ENCODE measurements at regions of chr3 and their contacts with region 1.

Region 1: GRCh38 chr3:160413613-160414248 is 14.3 kb downstream of the SMC4 start:
- DNase-seq: peak; percentile 78
- ATAC-seq: peak; percentile 69
- H3K4me3 Mint-ChIP-seq: no peak overlapping the region
- H3K27ac Mint-ChIP-seq: no peak overlapping the region
- H3K4me1 Mint-ChIP-seq: peaks cover 2% of the 10 kb centered on the region
- H3K27me3 Mint-ChIP-seq: no peaks in the 10 kb centered on the region

Region 2: GRCh38 chr3:159861369-159861987 is 552.3 kb before region 1 on chr3:
- CTCF ChIA-PET with region 1: no interaction called
- POLR2A ChIA-PET with region 1: no interaction called
- intact Hi-C with region 1: no loop called
- DNase-seq: no peak
- ATAC-seq: no peak
- H3K4me3 Mint-ChIP-seq: no peak overlapping the region
- H3K27ac Mint-ChIP-seq: no peak overlapping the region
- H3K4me1 Mint-ChIP-seq: no peaks in the 10 kb centered on the region
- H3K27me3 Mint-ChIP-seq: peaks cover 4% of the 10 kb centered on the region

Region 3: DNA sequence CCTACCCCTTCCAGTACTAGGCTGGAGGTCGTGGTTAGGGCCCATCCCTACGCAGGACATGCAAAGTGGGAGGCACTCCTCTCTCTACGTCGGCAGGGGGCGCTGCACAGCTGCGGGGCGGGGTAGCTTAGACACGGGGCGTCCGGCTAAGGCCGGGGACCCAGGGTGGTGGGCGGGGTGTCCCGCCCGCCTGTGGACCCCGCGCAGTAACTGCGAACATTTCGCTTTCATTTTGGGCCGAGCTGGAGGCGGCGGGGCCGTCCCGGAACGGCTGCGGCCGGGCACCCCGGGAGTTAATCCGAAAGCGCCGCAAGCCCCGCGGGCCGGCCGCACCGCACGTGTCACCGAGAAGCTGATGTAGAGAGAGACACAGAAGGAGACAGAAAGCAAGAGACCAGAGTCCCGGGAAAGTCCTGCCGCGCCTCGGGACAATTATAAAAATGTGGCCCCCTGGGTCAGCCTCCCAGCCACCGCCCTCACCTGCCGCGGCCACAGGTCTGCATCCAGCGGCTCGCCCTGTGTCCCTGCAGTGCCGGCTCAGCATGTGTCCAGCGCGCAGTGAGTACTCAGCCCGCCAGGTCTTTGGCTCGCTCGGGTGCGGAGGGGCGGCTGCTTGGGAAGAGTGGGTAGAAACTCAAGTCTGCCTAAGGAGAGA is 425.0 kb before region 1 on chr3 and contains the start of gene IL12A:
- CTCF ChIA-PET with region 1: interaction called, 4 read pairs
- POLR2A ChIA-PET with region 1: no interaction called
- intact Hi-C with region 1: loop called in 1 of 2 experiments (anchors 5 kb)
- DNase-seq: peak; percentile 88
- ATAC-seq: peak; percentile 95
- H3K4me3 Mint-ChIP-seq: peak within 1 kb of the TSS; percentile 52
- H3K27ac Mint-ChIP-seq: peak within 1 kb of the TSS; percentile 44
- H3K4me1 Mint-ChIP-seq: peaks cover 21% of the 10 kb centered on the region
- H3K27me3 Mint-ChIP-seq: peaks cover 13% of the 10 kb centered on the region
- total RNA-seq, gene IL12A: not detected

Region 4: DNA sequence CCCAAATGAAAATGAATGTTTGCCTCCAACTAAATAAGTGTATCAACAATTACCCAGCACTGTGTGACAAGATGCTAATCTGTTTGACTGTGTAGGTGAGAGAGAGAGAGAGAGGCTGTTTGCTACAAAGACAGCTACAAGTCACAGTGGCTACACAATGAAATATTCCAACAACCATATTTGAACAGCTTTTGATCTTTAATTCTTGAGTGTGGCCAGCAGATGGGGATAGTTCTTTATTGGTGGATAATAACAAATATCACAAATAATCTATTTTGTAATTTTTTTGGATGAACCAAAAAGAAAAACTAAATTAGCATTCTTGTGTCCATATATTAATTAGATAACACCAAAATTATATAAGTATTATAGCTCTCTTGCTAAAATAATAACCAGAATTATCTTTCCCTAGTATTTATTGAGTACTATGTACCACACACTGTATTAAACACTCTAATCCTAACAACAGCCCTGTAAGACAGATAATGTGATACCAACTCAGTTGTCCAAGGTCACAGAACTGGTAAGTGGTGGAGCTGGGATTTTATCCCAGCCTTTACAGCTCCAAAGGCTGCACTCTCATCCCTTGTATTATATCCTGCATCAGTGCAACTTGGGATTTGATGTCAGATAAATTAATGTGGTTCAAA is 250.4 kb before region 1 on chr3:
- CTCF ChIA-PET with region 1: interaction called, 5 read pairs
- POLR2A ChIA-PET with region 1: interaction called, 11 read pairs
- intact Hi-C with region 1: loop called in 1 of 2 experiments (anchors 2 kb)
- DNase-seq: no peak
- ATAC-seq: no peak
- H3K4me3 Mint-ChIP-seq: no peak overlapping the region
- H3K27ac Mint-ChIP-seq: no peak overlapping the region
- H3K4me1 Mint-ChIP-seq: no peaks in the 10 kb centered on the region
- H3K27me3 Mint-ChIP-seq: no peaks in the 10 kb centered on the region

Region 5: DNA sequence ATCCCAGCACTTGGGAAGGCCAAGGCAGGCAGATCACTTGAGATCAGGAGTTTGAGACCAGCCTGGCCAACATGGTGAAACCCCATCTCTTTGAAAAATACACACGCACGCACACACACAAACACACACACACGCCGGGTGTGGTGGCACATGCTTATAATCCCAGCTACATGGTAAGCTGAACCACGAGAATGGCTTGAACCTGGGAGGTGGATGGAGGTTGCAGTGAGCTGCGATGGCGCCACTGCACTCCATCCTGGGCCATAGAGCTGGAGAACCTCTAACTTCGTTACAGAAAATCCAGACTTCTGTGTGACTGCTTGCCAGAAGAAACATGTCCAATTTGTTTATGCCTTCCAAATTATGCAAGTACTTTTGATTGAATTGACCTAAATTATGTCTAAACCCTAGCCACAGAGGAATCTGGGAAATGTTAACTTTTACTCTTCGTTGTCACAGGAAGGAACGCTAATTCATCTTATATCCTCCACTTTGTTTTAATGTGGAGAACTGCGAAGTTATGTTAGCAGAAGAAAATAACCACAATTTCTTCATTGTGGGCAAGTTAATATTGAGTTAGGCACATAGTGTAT is 14.2 kb after region 1 on chr3:
- CTCF ChIA-PET with region 1: interaction called, 26 read pairs
- POLR2A ChIA-PET with region 1: no interaction called
- intact Hi-C with region 1: loop called in 1 of 2 experiments (anchors 1 kb)
- DNase-seq: no peak
- ATAC-seq: no peak
- H3K4me3 Mint-ChIP-seq: no peak overlapping the region
- H3K27ac Mint-ChIP-seq: no peak overlapping the region
- H3K4me1 Mint-ChIP-seq: no peaks in the 10 kb centered on the region
- H3K27me3 Mint-ChIP-seq: no peaks in the 10 kb centered on the region

Region 6: DNA sequence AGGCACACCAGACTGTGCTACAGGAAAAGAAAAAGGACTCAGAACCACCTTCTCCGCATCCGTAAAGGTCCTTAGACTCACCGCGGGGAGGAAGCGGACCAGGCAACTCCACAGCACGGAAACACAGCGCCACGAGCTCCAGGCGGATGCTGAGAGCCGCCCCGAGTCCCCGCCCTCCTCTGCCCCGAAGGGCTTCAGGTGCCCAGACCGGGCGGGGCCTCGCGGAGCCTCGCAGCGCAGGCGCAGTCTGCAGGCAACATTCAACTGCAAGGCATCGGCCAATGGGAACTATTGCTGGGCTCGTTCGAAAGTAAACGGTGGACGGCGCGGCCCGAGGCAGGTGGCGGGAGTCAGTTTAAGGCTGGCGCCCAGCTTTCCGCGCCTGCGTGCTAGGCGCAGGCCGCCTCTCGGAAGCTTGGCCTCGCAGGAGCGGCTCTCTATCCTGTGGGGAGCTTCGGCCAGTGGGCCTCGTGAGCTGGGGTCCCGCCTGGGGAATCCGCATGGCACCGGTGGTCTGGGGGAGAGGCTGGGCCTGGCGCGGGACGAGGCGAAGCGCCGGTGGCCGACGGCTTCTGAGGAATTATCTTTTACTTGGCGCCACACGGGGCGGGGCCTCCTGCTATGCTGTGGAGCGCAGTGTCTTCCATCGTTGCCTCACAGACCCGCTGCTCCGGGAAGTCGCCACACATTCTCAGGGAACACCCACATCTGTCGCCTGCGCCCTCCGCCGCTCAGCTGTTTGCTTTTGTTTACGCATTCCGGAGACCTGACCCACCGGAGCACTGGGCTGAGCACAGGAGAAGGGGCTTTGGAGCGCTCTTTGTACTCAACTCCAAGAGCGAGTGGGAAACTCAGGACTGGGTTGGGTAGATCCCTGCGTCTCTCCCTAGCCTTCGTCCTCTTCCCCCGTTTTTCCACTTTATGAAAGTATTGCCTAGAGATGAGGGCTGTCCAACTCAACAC is 36.2 kb after region 1 on chr3 and contains the start of gene TRIM59:
- CTCF ChIA-PET with region 1: interaction called, 7 read pairs
- POLR2A ChIA-PET with region 1: interaction called, 9 read pairs
- intact Hi-C with region 1: loop called in 1 of 2 experiments (anchors 1 kb)
- DNase-seq: peak; percentile 99
- ATAC-seq: peak; percentile 95
- H3K4me3 Mint-ChIP-seq: peak within 1 kb of the TSS; percentile 97
- H3K27ac Mint-ChIP-seq: peak within 1 kb of the TSS; percentile 96
- H3K4me1 Mint-ChIP-seq: peaks cover 20% of the 10 kb centered on the region
- H3K27me3 Mint-ChIP-seq: no peaks in the 10 kb centered on the region
- total RNA-seq, gene TRIM59: 32.5 to 42.2 TPM

Measured in activated CD4-positive, alpha-beta T cell treated with anti-CD3 and anti-CD28 coated beads for 36 hours (primary cell).